ENCODE measurements at regions of chr7 and their contacts with region 1.

Region 1: GRCh38 chr7:83976295-83976694 is 218.3 kb downstream of the SEMA3A start:
- DNase-seq: peak in 6 of 42 donors; percentile 10 to 59 (median 26)

Region 2: DNA sequence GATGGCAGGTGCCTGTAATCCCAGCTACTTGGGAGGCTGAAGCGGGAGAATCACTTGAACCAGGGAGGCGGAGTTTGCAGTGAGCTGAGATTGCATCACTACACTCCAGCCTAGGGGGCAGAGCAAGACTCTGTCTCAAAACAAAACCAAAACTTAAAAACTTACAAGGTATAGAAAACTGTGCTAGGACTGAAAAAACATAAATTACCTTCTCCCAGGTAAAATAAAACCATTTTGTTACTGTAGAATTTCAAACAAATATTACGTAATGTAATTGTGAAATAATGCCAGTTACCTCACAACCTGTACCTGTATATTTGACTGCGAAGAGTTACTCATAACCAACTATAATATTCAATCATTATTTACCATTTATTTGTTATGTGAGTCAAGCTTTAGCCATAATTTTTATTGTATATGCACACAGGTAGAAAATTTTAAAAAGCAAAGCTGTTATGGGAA is 37.4 kb after region 1 on chr7:
- intact Hi-C with region 1: no loop called
- DNase-seq: no peak

Region 3: GRCh38 chr7:84188786-84189405 is 212.6 kb after region 1 on chr7:
- intact Hi-C with region 1: loop called (anchors 10 kb)
- DNase-seq: peak in 1 of 42 donors; percentile 22